ENCODE measurements at regions of chrX and their contacts with region 1.

Region 1: GRCh38 chrX:115940888-115941332 is 229.6 kb upstream of the AGTR2 start:
- DNase-seq: peak; percentile 81 to 82
- H3K4me3 ChIP-seq: peak overlapping the region; percentile 39; the same call in 1 of the 2 replicates
- H3K27ac ChIP-seq: peak overlapping the region; percentile 25; the same call in 1 of the 2 replicates
- H3K4me1 ChIP-seq: peaks cover 28% of the 10 kb centered on the region
- H3K27me3 ChIP-seq: no peaks in the 10 kb centered on the region
- CTCF ChIP-seq: peak; percentile 78

Region 2: DNA sequence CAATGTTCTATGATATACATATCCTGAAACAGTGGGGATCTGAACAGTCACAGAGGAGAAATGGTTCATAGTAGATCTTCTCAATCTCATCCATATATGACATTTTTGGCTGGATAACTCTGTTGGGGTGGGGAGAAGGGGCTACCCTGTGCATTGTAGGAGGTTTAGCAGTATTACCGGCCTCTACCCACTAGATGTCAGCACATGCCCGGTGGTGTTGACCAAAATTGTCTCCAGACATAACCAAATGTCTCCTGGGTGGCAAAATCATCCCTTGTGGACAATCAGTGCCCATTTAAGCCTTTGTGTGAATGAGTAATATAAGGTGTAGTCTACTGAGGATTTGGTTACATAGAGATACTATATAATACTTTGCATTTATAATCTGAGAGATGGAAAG is 290.0 kb before region 1 on chrX:
- CTCF ChIA-PET with region 1: interaction called, 3 read pairs
- POLR2A ChIA-PET with region 1: no interaction called
- intact Hi-C with region 1: loop called (anchors 10 kb)
- DNase-seq: peak; percentile 39 to 74
- H3K4me3 ChIP-seq: no peak overlapping the region
- H3K27ac ChIP-seq: peak overlapping the region; percentile 83
- H3K4me1 ChIP-seq: peaks cover 27% of the 10 kb centered on the region
- H3K27me3 ChIP-seq: no peaks in the 10 kb centered on the region
- CTCF ChIP-seq: peak; percentile 86

Region 3: GRCh38 chrX:115898382-115899001 is 42.4 kb before region 1 on chrX:
- CTCF ChIA-PET with region 1: no interaction called
- POLR2A ChIA-PET with region 1: no interaction called
- intact Hi-C with region 1: loop called (anchors 1 kb)
- DNase-seq: peak; percentile 68 to 85
- H3K4me3 ChIP-seq: no peak overlapping the region
- H3K27ac ChIP-seq: no peak overlapping the region
- H3K4me1 ChIP-seq: peaks cover 19% of the 10 kb centered on the region
- H3K27me3 ChIP-seq: no peaks in the 10 kb centered on the region
- CTCF ChIP-seq: peak; percentile 68

Region 4: GRCh38 chrX:115957862-115958483 is 17.1 kb after region 1 on chrX:
- CTCF ChIA-PET with region 1: no interaction called
- POLR2A ChIA-PET with region 1: no interaction called
- intact Hi-C with region 1: no loop called
- DNase-seq: peak in 1 of 2 experiments; percentile 46
- H3K4me3 ChIP-seq: no peak overlapping the region
- H3K27ac ChIP-seq: no peak overlapping the region
- H3K4me1 ChIP-seq: peaks cover 30% of the 10 kb centered on the region
- H3K27me3 ChIP-seq: no peaks in the 10 kb centered on the region
- CTCF ChIP-seq: peak; percentile 57